Activated T-helper 1 cell treated with anti-CD3 and anti-CD28 coated beads, Interleukin-12 subunit alpha, Interleukin-12 subunit beta, Interleukin-2, Interleukin-4 antibody, amounts not matched to agents 30 ng/mL and 10 ng/mL and 1 ng/mL, durations not matched to agents 14 hours and 24 hours and 36 hours (primary cell): ENCODE measurements at regions of chr6 and their contacts with region 1.

Region 1: GRCh38 chr6:14876778-14877613 is 368.9 kb upstream of the JARID2 start:
- DNase-seq: peak; percentile 48
- H3K4me3 Mint-ChIP-seq: peak overlapping the region; percentile 68
- H3K27ac Mint-ChIP-seq: peak overlapping the region; percentile 98
- H3K4me1 Mint-ChIP-seq: peaks cover 75% of the 10 kb centered on the region
- H3K27me3 Mint-ChIP-seq: no peaks in the 10 kb centered on the region

Region 2: DNA sequence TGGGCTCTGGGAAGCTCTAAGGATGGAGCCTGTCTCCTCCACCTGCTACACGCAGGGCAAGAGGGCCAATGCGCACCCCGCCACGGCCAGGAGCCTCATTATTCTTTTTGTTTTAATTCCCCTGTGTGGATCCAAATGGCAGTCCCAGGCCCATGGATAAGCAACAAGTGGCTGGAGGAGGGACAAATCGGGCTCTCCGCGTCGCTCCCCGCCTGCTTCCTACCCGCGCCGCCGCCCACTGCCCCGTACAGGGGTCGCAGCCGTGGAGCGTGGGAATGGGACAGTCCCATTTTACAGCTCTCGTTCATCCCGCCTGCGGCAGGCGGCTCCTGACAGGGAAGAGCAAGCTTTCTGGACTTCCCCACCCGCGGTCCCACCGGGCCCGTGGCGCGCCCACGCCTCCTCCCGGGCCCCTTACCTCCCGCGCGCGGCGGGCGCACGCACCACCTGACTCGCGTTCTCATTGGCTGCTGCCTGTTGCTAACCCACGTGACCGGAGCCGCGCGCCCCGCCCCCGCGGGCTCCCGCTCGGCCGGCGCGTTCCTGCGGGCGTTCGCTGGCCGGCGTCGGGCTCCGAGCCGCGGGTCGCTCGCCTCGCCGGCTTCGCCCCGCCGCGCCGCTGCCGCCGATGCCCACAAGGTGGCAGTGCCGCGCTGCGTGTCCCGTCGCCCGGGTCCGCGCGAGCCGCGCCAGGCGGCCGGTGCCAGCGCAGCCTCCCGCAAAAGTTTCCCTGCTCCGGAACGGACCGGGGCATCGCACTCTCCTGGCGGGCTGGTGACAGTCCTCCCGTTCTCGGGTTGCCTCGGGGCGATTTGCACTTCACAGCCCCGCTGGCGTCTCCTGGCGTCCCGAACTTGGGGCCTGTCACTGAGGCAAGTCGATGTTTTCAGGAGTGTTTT is 666.1 kb before region 1 on chr6:
- intact Hi-C with region 1: loop called (anchors 1 kb)
- DNase-seq: peak; percentile 91
- H3K4me3 Mint-ChIP-seq: peak overlapping the region; percentile 80
- H3K27ac Mint-ChIP-seq: peak overlapping the region; percentile 70
- H3K4me1 Mint-ChIP-seq: peaks cover 29% of the 10 kb centered on the region
- H3K27me3 Mint-ChIP-seq: peaks cover 6% of the 10 kb centered on the region

Region 3: GRCh38 chr6:14542670-14543366 is 334.2 kb before region 1 on chr6:
- intact Hi-C with region 1: loop called (anchors 5 kb)
- DNase-seq: peak; percentile 10
- H3K4me3 Mint-ChIP-seq: no peak overlapping the region
- H3K27ac Mint-ChIP-seq: peak overlapping the region; percentile 64
- H3K4me1 Mint-ChIP-seq: peaks cover 26% of the 10 kb centered on the region
- H3K27me3 Mint-ChIP-seq: peaks cover 1% of the 10 kb centered on the region

Region 4: DNA sequence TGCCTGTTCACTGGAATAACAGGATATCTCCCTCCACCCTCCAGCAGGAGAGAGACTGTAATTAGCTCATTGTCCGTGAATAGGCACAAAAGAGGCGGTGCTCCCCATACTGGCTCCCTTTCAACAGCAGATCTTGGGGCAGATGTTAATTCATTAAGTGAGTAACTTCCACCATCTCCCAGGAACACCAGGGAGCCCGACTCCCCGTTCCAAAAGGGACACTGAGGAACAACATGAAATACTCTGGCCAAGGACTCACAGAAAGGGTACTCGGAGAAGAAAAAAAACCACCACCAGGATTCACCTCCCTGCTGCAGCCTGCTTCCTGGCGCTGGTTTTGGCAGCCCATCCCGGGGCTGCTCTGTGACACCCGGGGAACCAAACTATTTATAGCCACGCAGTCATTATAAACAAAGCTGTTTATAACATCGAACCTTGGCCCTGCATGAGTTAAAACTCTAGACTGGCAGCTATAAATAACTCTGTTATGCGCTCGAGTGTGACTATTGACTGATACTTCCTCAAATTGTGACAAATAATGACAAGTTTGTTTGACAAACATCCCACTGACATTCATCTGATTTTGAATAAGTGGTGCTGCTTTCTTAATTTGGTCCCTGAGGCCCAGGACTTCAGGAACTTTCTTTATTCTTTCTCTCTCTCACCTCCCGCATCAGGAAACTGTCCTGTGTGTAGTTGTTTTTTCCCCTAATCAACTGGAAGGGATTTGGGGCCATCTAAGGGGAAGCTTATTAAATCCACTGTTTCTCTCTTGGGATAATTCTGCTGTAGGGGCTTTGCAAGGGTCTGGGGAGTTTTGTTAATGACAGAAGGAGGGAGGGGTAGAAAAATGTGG is 237.9 kb before region 1 on chr6:
- intact Hi-C with region 1: no loop called
- DNase-seq: no peak
- H3K4me3 Mint-ChIP-seq: no peak overlapping the region
- H3K27ac Mint-ChIP-seq: no peak overlapping the region
- H3K4me1 Mint-ChIP-seq: peaks cover 70% of the 10 kb centered on the region
- H3K27me3 Mint-ChIP-seq: peaks cover 8% of the 10 kb centered on the region

Region 5: GRCh38 chr6:14857501-14857900 is 19.5 kb before region 1 on chr6:
- intact Hi-C with region 1: loop called (anchors 1 kb)
- DNase-seq: peak; percentile 42
- H3K4me3 Mint-ChIP-seq: peak overlapping the region; percentile 51
- H3K27ac Mint-ChIP-seq: peak overlapping the region; percentile 96
- H3K4me1 Mint-ChIP-seq: peaks cover 42% of the 10 kb centered on the region
- H3K27me3 Mint-ChIP-seq: no peaks in the 10 kb centered on the region

Region 6: GRCh38 chr6:15245361-15246216 is 368.6 kb after region 1 on chr6 and contains the start of gene JARID2:
- intact Hi-C with region 1: loop called (anchors 1 kb)
- DNase-seq: peak; percentile 92
- H3K4me3 Mint-ChIP-seq: peak within 1 kb of the TSS; percentile 98
- H3K27ac Mint-ChIP-seq: peak within 1 kb of the TSS; percentile 96
- H3K4me1 Mint-ChIP-seq: peaks cover 17% of the 10 kb centered on the region
- H3K27me3 Mint-ChIP-seq: no peaks in the 10 kb centered on the region
- total RNA-seq, gene JARID2: 60.5 and 62.5 TPM in 2 replicates

Region 7: GRCh38 chr6:15421947-15422733 is 545.1 kb after region 1 on chr6:
- intact Hi-C with region 1: loop called (anchors 1 kb)
- DNase-seq: peak; percentile 50
- H3K4me3 Mint-ChIP-seq: peak overlapping the region; percentile 59
- H3K27ac Mint-ChIP-seq: peak overlapping the region; percentile 83
- H3K4me1 Mint-ChIP-seq: peaks cover 80% of the 10 kb centered on the region
- H3K27me3 Mint-ChIP-seq: no peaks in the 10 kb centered on the region